GM12878 (cell line): ENCODE measurements at regions of chr18 and their contacts with region 1.

Region 1: GRCh38 chr18:69958422-69958821 is 10.7 kb upstream of the CD226 start:
- DNase-seq: no peak
- ATAC-seq: peak; percentile 62
- H3K4me3 ChIP-seq: no peak overlapping the region
- H3K27ac ChIP-seq: peak overlapping the region; percentile 70; the same call in 1 of the 2 replicates
- H3K4me1 ChIP-seq: peaks cover 36% of the 10 kb centered on the region
- H3K27me3 ChIP-seq: no peaks in the 10 kb centered on the region
- CTCF ChIP-seq: no peak
- EP300 ChIP-seq: peak in 1 of 2 experiments; percentile 25; a peak in 1 of 4 replicates
- POLR2A ChIP-seq: no peak
- RAD21 ChIP-seq: no peak

Region 2: DNA sequence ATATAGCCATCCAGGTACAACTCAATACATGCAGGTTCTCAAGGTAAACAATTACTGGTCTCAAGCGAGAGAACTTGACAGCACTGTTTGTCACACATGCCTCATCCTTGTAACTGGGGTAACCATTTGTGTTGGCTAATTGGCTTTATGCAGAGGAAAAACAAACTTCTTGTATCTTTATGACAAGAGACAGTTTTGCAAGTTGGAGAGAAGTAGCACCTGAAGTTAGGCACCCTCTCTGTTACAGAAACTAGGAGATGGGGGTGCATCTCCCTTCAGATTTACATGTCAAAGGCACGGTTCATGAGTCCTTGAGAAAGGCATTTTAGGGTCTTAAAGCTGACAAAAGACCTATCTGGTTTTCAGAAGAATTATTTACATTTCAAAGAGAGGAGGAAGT is 252.4 kb before region 1 on chr18:
- CTCF ChIA-PET with region 1: no interaction called
- POLR2A ChIA-PET with region 1: no interaction called
- RAD21 ChIA-PET with region 1: no interaction called
- SMC1A ChIA-PET with region 1: no interaction called
- in situ Hi-C with region 1: no loop called
- intact Hi-C with region 1: no loop called
- DNase-seq: no peak
- ATAC-seq: no peak
- H3K4me3 ChIP-seq: no peak overlapping the region
- H3K27ac ChIP-seq: no peak overlapping the region
- H3K4me1 ChIP-seq: no peaks in the 10 kb centered on the region
- H3K27me3 ChIP-seq: no peaks in the 10 kb centered on the region
- CTCF ChIP-seq: no peak
- EP300 ChIP-seq: no peak
- POLR2A ChIP-seq: no peak
- RAD21 ChIP-seq: no peak

Region 3: GRCh38 chr18:69935319-69936190 is 22.9 kb before region 1 on chr18:
- CTCF ChIA-PET with region 1: interaction called, 6 read pairs
- POLR2A ChIA-PET with region 1: interaction called, 3 read pairs
- RAD21 ChIA-PET with region 1: interaction called, 5 read pairs
- SMC1A ChIA-PET with region 1: interaction called, 19 read pairs
- in situ Hi-C with region 1: no loop called
- intact Hi-C with region 1: no loop called
- DNase-seq: peak; percentile 89
- ATAC-seq: peak; percentile 92
- H3K4me3 ChIP-seq: no peak overlapping the region
- H3K27ac ChIP-seq: peak overlapping the region; percentile 88
- H3K4me1 ChIP-seq: peaks cover 40% of the 10 kb centered on the region
- H3K27me3 ChIP-seq: no peaks in the 10 kb centered on the region
- CTCF ChIP-seq: no peak
- EP300 ChIP-seq: peak; percentile 89 to 94
- POLR2A ChIP-seq: peak; percentile 57
- RAD21 ChIP-seq: no peak

Region 4: DNA sequence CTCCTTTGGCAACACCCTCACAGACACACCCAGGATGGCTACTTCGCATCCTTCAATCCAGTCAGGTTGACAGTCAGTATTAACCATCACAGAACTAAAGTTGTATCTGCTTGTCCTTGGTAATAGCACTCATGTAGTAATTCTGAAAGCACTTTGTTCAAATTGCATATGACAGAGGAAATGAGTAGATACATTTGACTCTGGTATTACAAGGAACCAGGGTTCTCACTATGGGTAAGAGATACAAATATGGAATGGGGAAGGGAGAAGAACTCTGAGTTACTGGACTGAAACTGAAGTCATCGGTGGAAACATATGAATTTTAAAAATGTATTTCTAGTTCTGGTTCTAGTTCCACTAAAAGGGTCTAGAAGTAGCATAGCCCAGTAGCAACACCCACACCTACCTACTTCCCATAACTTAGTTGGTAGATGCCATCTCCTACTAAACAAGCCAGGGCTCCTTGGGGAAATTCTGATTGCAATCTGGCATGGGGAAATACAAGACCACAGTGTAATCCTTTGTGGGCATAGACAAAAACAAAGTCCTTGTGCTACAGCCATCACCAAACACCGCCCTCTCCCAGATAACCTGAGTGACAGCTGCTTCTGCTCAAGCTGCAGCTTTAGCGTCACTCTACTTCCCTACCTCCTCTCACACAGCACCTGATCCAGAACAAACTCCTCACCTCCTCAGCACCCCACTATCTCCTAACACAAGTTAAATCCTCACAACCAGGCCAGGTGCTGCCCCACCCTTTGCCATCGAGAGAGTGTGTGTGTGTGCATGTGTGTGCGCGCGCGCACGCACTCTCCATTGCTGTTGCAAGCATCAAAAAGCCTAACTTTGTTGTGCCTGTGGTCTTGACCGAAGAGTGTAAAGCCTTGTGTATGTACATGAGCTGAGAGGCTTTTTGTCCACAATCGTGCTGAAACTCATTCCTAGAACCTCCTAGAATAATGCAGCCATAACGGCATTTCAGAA is 20.6 kb after region 1 on chr18:
- CTCF ChIA-PET with region 1: interaction called, 4 read pairs
- POLR2A ChIA-PET with region 1: no interaction called
- RAD21 ChIA-PET with region 1: interaction called, 4 read pairs
- SMC1A ChIA-PET with region 1: interaction called, 5 read pairs
- in situ Hi-C with region 1: no loop called
- intact Hi-C with region 1: loop called (anchors 2 kb)
- DNase-seq: no peak
- ATAC-seq: peak; percentile 73
- H3K4me3 ChIP-seq: no peak overlapping the region
- H3K27ac ChIP-seq: peak overlapping the region; percentile 69
- H3K4me1 ChIP-seq: peaks cover 38% of the 10 kb centered on the region
- H3K27me3 ChIP-seq: no peaks in the 10 kb centered on the region
- CTCF ChIP-seq: no peak
- EP300 ChIP-seq: no peak; a peak in 1 of 4 replicates
- POLR2A ChIP-seq: no peak
- RAD21 ChIP-seq: no peak

Region 5: DNA sequence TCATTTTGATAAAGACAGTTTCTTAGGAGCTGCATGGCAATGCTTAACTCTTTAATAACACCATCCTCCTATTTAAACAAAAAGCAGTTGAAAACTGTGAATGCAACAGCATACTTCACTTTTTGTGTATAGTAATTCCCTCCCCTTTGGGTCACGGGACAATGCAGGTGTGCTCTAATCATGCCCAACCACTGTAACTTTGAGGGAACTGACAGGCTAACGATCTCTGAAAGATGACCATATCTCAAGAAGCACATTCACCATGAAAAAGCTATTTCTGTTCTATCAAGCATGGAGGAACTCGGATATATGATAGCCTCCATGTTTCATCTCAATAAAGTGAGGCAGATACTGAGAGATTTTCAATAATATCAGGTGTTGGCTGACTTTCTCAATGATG is 70.3 kb after region 1 on chr18:
- CTCF ChIA-PET with region 1: interaction called, 12 read pairs
- POLR2A ChIA-PET with region 1: no interaction called
- RAD21 ChIA-PET with region 1: interaction called, 11 read pairs
- SMC1A ChIA-PET with region 1: interaction called, 6 read pairs
- in situ Hi-C with region 1: no loop called
- intact Hi-C with region 1: no loop called
- DNase-seq: peak; percentile 27
- ATAC-seq: peak; percentile 88
- H3K4me3 ChIP-seq: no peak overlapping the region
- H3K27ac ChIP-seq: no peak overlapping the region; the same call in 1 of the 2 replicates
- H3K4me1 ChIP-seq: peaks cover 7% of the 10 kb centered on the region; the same call in 1 of the 2 replicates
- H3K27me3 ChIP-seq: no peaks in the 10 kb centered on the region
- CTCF ChIP-seq: no peak
- EP300 ChIP-seq: 0 out of 4 replicates have a peak, but pooled peaks of 1 of the 2 experiments have one; percentile 29
- POLR2A ChIP-seq: no peak
- RAD21 ChIP-seq: no peak

Region 6: GRCh38 chr18:70142001-70142400 is 183.6 kb after region 1 on chr18:
- CTCF ChIA-PET with region 1: no interaction called
- POLR2A ChIA-PET with region 1: no interaction called
- RAD21 ChIA-PET with region 1: no interaction called
- SMC1A ChIA-PET with region 1: no interaction called
- in situ Hi-C with region 1: no loop called
- intact Hi-C with region 1: no loop called
- DNase-seq: no peak
- ATAC-seq: no peak
- H3K4me3 ChIP-seq: no peak overlapping the region
- H3K27ac ChIP-seq: no peak overlapping the region
- H3K4me1 ChIP-seq: no peaks in the 10 kb centered on the region
- H3K27me3 ChIP-seq: no peaks in the 10 kb centered on the region
- CTCF ChIP-seq: no peak
- EP300 ChIP-seq: no peak
- POLR2A ChIP-seq: no peak
- RAD21 ChIP-seq: no peak

Region 7: GRCh38 chr18:70288851-70289328 is 330.5 kb after region 1 on chr18 and contains the start of gene SOCS6:
- CTCF ChIA-PET with region 1: no interaction called
- POLR2A ChIA-PET with region 1: no interaction called
- RAD21 ChIA-PET with region 1: no interaction called
- SMC1A ChIA-PET with region 1: no interaction called
- in situ Hi-C with region 1: no loop called
- intact Hi-C with region 1: loop called (anchors 5 kb)
- DNase-seq: no peak
- ATAC-seq: peak; percentile 74
- H3K4me3 ChIP-seq: peak within 1 kb of the TSS; percentile 76
- H3K27ac ChIP-seq: peak within 1 kb of the TSS; percentile 52
- H3K4me1 ChIP-seq: peaks cover 5% of the 10 kb centered on the region
- H3K27me3 ChIP-seq: no peaks in the 10 kb centered on the region; a peak in 1 of 4 replicates
- CTCF ChIP-seq: no peak
- EP300 ChIP-seq: no peak
- POLR2A ChIP-seq: peak; percentile 85
- RAD21 ChIP-seq: no peak
- polyA plus RNA-seq, gene SOCS6: 1.6 to 1.8 TPM